ENCODE measurements at regions of chr16 and their contacts with region 1.

Region 1: DNA sequence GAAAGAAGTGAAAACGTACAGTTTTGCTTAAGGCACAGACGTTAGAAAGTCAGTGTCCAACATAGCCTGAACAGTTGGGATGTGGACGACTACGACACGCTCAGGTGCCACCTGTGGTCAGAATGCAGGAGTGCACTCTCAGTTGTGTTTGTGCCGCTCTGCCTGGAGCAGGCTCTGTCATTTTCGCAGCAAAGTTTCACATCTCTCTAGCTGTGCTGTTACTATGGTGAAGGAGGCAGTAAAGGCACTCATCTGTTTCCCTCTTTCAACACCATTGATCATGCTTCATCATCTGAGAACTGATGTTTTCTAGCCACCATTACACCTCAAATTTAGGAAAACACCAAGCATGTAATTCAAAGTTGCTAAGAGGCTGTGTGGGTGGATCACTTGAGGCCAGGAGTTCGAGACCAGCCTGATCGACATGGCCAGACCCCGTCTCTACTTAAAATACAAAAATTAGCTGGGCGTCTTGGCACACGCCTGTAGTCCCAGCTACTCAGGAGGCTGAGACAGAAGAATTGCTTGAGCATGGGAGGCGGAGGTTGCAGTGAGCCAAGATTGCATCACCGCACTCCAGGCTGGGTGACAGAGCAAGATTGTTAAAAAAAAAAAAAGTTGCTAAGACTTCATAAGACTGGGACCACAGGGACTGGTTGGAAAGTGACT is 44.9 kb upstream of the DNAJA2 start:
- DNase-seq: peak; percentile 13
- H3K4me3 ChIP-seq: no peak overlapping the region
- H3K27ac ChIP-seq: no peak overlapping the region
- H3K4me1 ChIP-seq: no peaks in the 10 kb centered on the region
- H3K27me3 ChIP-seq: no peaks in the 10 kb centered on the region
- CTCF ChIP-seq: peak in 1 of 2 donors; percentile 33
- POLR2A ChIP-seq: no peak

Region 2: GRCh38 chr16:47008174-47008573 is 10.2 kb before region 1 on chr16:
- CTCF ChIA-PET with region 1: interaction called, 11 read pairs
- POLR2A ChIA-PET with region 1: no interaction called
- dilution Hi-C with region 1: no loop called
- intact Hi-C with region 1: no loop called
- DNase-seq: no peak
- H3K4me3 ChIP-seq: peak overlapping the region in 1 of 3 experiments; percentile 17
- H3K27ac ChIP-seq: no peak overlapping the region
- H3K4me1 ChIP-seq: peaks cover 7% of the 10 kb centered on the region
- H3K27me3 ChIP-seq: no peaks in the 10 kb centered on the region
- CTCF ChIP-seq: no peak
- POLR2A ChIP-seq: no peak